H1 (cell line): ENCODE measurements at regions of chr9 and their contacts with region 1.

Region 1: DNA sequence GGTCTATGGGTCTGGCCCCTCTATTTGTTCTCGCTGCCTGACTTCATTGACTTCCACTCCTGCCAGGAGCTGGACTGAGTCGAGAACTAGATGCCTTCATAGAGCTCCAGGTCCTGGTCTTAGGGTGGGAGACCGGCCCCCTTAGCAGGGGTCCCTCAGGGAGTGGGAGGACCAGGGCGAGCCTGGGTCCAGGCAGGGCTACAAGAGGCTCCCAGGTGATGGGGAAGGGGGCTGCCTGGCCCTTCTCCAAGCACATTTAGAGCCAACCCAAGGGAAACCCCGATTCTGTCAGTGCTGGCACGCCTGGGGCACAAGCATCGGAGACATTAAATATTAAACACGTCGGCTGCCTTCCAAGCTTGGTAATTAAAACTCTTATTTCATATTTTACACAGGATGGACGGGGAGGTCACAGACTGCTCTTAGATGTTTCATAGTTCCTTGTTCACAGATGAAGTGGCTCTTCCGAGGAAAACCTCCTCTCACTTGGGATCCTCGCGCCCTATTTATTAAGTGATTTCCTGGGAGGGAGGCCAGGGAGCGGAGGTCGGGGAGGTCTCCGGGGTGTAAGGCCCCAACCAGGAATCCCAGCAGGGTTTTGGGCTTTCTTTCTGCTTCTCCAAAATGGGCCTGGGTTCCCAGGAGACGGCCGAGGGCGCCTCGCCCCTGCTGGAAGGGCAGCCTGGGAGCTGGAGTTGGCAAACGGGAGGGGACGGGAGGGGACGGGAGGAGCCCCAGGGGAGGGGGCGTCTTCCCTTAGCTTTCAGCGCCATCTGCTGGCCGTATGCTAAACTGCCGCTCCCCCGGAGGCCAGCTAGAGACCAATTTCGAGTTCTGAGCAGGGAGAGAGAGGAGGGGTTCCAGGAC is 23.4 kb upstream of the ZBTB43 start:
- DNase-seq: peak; percentile 68 to 100
- H3K4me3 ChIP-seq: no peak overlapping the region
- H3K27ac ChIP-seq: no peak overlapping the region
- H3K4me1 ChIP-seq: peaks cover 0 to 2% (median under 1%) of the 10 kb centered on the region in 4 experiments; a peak in 1 of 7 replicates
- H3K27me3 ChIP-seq: peaks cover 0 to 5% (median 2%) of the 10 kb centered on the region in 4 experiments; a peak in 4 of 7 replicates
- CTCF ChIP-seq: peak; percentile 90 to 97 (median 91)
- EP300 ChIP-seq: no peak
- POLR2A ChIP-seq: no peak
- RAD21 ChIP-seq: peak; percentile 97 to 98

Region 2: DNA sequence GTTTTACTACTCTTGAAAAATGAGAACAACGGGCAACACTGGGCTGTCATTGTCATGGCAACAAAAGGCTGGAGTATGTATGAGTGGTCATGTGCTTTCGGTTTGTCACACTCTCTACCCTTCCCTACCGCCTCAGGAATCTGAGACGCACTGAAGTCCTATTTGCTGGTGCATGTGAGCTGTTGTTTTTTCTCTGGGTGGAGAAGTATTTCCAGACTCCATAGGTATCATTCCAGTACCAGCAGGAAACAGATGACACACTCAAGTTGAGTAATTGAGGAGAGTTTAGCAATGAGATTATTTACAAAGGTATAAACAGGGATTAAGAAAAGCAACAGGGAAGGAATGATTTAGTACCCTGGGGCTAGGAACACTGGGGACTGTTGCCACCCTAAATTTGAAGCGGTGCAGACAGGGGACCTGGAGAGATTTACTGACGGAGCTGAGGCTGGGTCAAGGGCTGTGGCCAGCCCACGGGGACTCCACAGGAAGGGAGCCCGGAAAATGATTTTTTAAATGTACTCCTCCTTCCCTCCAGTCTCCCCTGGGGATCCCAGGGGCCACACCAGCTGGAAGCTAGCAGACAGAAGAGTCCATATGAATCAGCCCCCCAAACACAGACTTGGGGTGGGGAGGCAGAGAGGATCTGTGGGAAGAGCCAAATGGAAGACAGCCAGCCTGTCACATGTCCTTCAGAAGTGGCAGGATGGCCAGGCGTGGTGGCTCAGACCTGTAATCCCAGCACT is 10.2 kb after region 1 on chr9:
- CTCF ChIA-PET with region 1: interaction called, 18 read pairs
- POLR2A ChIA-PET with region 1: no interaction called
- DNase-seq: no peak
- H3K4me3 ChIP-seq: no peak overlapping the region
- H3K27ac ChIP-seq: no peak overlapping the region
- H3K4me1 ChIP-seq: peaks cover 0 to 2% (median 0%) of the 10 kb centered on the region in 4 experiments; a peak in 3 of 7 replicates
- H3K27me3 ChIP-seq: 0 out of 7 replicates have a peak, but pooled peaks cover 0 to 3% (median 0%) of the 10 kb centered on the region in 4 experiments
- CTCF ChIP-seq: no peak
- EP300 ChIP-seq: no peak
- POLR2A ChIP-seq: no peak
- RAD21 ChIP-seq: no peak

Region 3: DNA sequence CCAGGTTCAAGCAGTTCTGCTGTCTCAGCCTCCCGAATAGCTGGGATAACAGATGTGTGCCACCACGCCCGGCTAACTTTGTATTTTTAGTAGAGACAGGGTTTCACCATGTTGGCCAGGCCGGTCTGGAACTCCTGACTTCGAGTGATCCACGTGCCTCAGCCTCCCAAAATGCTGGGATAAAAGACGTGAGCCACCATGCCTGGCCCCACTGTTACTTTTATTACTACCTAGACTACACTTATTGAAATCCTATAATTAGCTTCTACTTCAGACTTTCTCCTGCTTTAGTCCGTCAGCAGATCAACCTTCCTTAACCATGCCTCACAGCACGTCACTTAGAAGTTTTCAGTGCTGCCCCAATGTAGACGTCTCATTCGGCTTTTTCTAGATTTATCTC is 31.7 kb after region 1 on chr9:
- CTCF ChIA-PET with region 1: no interaction called
- POLR2A ChIA-PET with region 1: no interaction called
- DNase-seq: no peak
- H3K4me3 ChIP-seq: no peak overlapping the region
- H3K27ac ChIP-seq: no peak overlapping the region
- H3K4me1 ChIP-seq: no peaks in the 10 kb centered on the region
- H3K27me3 ChIP-seq: no peaks in the 10 kb centered on the region
- CTCF ChIP-seq: no peak
- EP300 ChIP-seq: no peak
- POLR2A ChIP-seq: no peak
- RAD21 ChIP-seq: no peak

Region 4: GRCh38 chr9:126965541-126966428 is 184.4 kb after region 1 on chr9:
- CTCF ChIA-PET with region 1: no interaction called
- POLR2A ChIA-PET with region 1: no interaction called
- DNase-seq: peak; percentile 33 to 60
- H3K4me3 ChIP-seq: no peak overlapping the region
- H3K27ac ChIP-seq: no peak overlapping the region
- H3K4me1 ChIP-seq: peaks cover 0 to 8% (median under 1%) of the 10 kb centered on the region in 4 experiments; a peak in 4 of 7 replicates
- H3K27me3 ChIP-seq: no peaks in the 10 kb centered on the region
- CTCF ChIP-seq: peak; percentile 81 to 97 (median 92)
- EP300 ChIP-seq: no peak
- POLR2A ChIP-seq: no peak
- RAD21 ChIP-seq: peak; percentile 92 to 93